ENCODE measurements at regions of chr4 and their contacts with region 1.

Region 1: DNA sequence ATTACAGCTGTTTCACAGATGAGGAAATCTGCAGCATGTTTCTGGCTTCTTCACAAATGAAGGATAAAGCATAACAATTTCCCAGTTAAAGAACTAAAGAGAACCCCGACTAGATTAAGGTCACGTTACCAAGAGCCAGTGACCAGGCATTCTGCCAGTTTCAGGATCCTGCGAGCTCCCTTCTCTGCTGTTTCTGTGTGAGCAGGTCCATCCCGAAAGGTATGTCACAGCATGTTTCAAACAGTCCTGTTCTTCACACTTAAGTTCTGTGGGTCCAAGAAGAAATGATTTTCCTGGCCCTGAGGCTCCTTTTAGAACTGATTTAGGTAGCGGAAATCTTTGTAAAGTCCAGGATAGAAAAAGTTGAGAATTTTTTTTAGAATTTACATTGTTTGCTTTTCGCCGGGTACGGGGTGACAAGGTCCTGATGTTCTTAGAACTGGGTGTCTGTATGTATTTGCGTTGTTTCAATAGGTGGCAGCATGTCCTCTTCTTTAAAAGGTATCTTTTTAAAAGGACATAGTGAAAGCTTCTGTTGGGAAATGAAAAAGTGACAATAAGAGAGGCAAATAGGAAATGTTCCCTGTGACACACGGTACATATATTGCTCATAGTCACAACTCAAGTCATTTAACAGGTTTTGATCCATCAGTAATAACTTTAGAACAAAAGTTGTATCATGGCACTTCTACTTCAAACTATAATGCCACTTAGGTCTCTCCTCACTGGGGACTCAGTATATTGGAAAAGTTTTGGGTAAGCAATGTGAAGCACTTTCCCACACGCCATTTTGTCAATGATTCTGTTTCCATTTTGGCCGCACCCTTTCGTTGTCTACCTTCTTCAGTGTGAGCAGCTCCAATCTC is 18.4 kb downstream of the IL21 start:
- DNase-seq: no peak
- ATAC-seq: peak; percentile 68

Region 2: DNA sequence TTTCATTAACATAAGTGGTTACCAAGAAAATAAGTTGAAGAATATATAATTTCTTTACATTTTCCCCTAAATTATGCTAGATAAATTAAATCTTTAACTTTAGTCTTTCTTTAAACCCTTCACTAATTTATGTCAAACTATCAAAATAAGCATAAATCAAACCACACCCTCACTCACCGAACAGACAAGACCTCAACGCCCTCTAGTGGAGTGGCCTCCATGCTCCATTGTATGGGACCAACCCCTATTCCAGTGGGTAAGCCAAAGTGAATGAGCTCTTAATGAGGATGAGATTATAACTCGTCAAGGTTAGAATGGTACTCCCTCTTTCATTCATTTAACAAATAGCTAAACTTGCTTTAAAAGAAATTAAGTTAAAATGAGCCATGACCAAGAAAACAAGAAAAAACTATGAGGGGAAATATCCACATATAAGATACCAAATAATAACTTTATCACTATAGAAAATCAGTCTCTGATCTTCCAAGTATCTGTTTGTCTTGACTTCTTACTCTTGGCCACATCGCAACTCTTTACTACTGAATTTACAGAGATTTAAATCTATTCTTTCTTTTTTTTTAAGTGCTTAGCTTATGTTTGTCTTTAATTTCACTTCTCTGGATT is 114.4 kb after region 1 on chr4:
- intact Hi-C with region 1: loop called in 1 of 2 experiments (anchors 10 kb)
- DNase-seq: peak; percentile 57 to 84
- ATAC-seq: peak; percentile 86

Region 3: DNA sequence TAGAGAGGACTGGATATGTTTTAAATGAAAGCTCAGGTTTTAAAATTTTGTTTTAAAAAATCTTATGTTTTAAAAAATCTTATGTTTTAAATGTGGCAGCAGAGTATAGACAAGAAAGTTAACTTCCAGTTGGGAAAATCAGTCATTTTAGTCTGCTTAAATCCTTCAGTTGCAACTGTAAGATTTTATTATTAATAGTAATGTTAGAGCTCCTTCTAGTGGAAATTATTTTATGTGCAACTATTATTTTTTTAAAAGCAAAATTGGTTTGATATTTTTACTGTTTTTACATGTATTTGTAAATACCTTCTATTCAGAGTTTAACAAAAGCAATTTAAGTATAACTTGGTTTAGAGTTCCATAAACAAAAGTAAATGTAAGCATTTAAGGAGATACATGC is 328.4 kb after region 1 on chr4:
- intact Hi-C with region 1: loop called in 1 of 2 experiments (anchors 2 kb)
- DNase-seq: no peak
- ATAC-seq: no peak

Measured in left colon (tissue), 2 donors.